AG04449 (cell line): ENCODE measurements at regions of chr6 and their contacts with region 1.

Region 1: DNA sequence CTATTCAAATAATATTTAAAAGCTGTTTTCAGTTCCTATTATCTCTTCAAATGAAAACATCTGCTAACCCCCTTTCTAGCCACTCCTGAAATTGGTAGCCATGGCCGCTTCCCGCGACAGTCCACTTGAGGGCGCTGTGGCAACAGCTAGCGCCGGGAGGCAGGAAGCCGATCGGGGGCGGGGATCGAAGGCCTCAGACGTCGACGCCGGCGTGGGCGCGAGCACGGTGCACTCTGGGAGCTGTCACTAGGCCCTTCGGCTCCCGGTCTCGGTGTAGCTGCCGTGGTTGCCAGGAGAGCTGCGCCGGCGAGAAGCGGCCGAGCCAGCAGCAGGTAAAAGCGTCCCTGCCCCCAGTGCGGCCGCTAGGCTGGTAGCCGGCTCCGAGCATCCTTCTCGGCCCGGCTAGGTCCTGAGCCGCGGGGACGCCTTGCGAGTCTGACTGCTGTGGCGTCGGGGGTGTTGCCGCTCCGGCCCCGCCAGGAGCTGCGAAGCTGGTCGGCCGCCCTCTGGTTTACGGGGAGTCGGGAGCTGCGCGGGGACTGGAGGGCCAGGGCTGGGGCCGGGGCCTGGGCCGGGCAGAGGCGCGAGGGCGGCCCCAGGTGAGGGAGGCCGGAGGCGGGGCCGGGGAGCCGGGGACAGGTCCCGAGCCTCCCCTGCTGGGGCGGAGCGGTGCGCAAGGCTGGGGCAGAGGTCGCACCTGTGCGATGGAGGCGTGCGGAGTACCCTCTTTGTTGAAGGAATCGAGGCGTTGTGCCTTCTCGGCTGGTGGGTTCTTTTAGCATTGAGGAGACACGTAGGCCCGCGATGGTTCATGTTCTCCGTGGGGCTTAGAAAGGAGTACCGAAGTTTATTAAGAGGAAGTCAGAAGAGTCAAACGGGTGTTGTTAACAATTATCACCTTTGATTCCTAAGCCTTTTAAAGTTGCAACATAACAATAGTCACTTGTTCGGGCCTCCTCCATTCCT is at the start of gene DOP1A:
- DNase-seq: peak; percentile 44
- H3K4me3 ChIP-seq: peak within 1 kb of the TSS; percentile 87
- CTCF ChIP-seq: peak; percentile 95

Region 2: GRCh38 chr6:82270881-82271645 is 796.7 kb before region 1 on chr6:
- CTCF ChIA-PET with region 1: interaction called, 65 read pairs
- POLR2A ChIA-PET with region 1: no interaction called
- DNase-seq: no peak
- H3K4me3 ChIP-seq: no peak overlapping the region
- CTCF ChIP-seq: peak; percentile 39

Region 3: GRCh38 chr6:83008663-83009062 is 59.1 kb before region 1 on chr6:
- CTCF ChIA-PET with region 1: no interaction called
- POLR2A ChIA-PET with region 1: no interaction called
- DNase-seq: no peak
- H3K4me3 ChIP-seq: no peak overlapping the region
- CTCF ChIP-seq: no peak

Region 4: DNA sequence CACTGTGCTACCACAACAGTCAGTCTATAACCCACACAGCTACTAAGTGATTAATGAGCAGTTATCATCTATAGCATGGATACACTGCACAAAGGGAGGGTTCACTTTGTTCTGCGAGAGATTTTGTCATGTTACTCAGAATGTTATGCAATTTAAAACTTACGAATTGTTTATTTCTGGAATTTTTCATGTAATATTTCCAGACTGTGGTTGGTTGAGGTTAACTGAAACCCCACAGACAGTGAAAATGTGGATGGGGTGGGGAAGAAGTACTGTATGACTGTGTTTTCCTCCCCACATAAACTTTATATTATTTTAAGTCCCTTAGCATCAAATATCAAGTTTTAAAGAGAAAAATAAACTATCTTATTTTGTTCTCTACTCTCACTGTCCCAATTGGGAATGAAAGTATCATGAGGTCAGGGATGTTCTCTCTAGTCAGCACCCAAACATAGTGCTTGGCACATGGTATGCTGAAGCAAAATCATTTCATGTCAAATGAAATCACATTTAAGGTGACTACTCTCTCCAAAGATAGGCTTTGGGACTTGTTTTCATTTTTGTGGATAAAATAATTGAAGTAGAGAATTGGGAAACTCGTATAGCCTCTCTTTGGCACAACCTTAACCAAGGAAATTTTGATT is 25.1 kb after region 1 on chr6:
- CTCF ChIA-PET with region 1: interaction called, 39 read pairs
- POLR2A ChIA-PET with region 1: no interaction called
- DNase-seq: no peak
- H3K4me3 ChIP-seq: no peak overlapping the region
- CTCF ChIP-seq: no peak

Region 5: DNA sequence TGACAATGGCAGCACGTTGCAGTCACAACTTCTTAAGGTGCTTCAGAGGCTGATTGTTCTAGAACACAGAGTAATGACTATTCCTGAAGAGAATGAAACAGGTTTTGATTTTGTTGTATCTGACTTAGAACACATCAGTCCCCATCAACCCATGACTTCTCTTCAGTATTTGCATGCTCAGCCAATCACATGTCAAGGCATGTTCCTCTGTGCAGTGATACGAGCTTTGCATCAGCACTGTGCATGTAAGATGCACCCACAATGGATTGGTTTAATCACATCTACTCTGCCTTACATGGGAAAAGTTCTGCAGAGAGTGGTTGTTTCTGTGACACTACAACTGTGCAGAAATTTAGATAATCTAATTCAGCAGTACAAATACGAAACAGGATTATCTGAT is 71.0 kb after region 1 on chr6:
- CTCF ChIA-PET with region 1: interaction called, 11 read pairs
- POLR2A ChIA-PET with region 1: no interaction called
- DNase-seq: no peak
- H3K4me3 ChIP-seq: no peak overlapping the region
- CTCF ChIP-seq: no peak

Region 6: GRCh38 chr6:83183082-83183828 is 115.5 kb after region 1 on chr6:
- CTCF ChIA-PET with region 1: interaction called, 111 read pairs
- POLR2A ChIA-PET with region 1: interaction called, 3 read pairs
- DNase-seq: peak; percentile 90
- H3K4me3 ChIP-seq: no peak overlapping the region
- CTCF ChIP-seq: no peak

Region 7: GRCh38 chr6:83381949-83382348 is 314.2 kb after region 1 on chr6:
- CTCF ChIA-PET with region 1: interaction called, 10 read pairs
- POLR2A ChIA-PET with region 1: no interaction called
- DNase-seq: no peak
- H3K4me3 ChIP-seq: no peak overlapping the region
- CTCF ChIP-seq: no peak

Region 8: DNA sequence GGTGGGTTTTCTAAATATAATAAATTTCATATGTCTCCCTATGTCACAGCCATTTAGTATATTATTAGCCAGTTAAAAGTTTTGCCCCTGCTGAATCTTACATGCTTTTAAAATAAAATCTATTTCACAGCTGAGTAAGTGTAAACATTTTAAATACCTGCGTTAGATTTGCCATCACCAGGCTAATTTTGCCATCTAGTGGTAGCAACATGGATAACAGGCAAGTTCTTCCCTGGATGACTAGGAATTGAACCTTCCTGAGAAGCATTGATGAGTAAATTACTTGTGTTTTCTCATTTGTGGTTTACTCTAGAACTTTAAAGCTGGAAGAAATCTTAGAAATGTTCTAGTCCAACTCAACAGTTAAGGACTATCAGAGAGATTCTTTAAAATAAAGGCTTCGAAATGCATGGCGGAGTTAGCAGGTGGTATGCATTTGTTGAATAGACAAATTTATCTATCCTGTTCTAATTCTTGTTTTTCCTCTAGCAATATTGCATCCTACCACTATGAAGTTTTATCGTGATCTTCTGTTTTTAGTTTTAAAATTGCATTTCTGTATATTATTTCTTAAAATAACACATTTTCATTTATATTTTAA is 447.2 kb after region 1 on chr6:
- CTCF ChIA-PET with region 1: interaction called, 345 read pairs
- POLR2A ChIA-PET with region 1: interaction called, 3 read pairs
- DNase-seq: peak; percentile 7
- H3K4me3 ChIP-seq: no peak overlapping the region
- CTCF ChIP-seq: peak; percentile 68